Activated CD4-positive, alpha-beta T cell treated with anti-CD3 and anti-CD28 coated beads, Interleukin-2, amount 10 ng/mL, durations not matched to agents 24 days and 14 days (primary cell): ENCODE measurements at regions of chr1 and their contacts with region 1.

Region 1: GRCh38 chr1:7646981-7647901 is 123.9 kb upstream of the VAMP3 start:
- DNase-seq: peak; percentile 89
- H3K4me3 Mint-ChIP-seq: no peak overlapping the region
- H3K27ac Mint-ChIP-seq: no peak overlapping the region
- H3K4me1 Mint-ChIP-seq: no peaks in the 10 kb centered on the region
- H3K27me3 Mint-ChIP-seq: no peaks in the 10 kb centered on the region

Region 2: GRCh38 chr1:6727535-6727934 is 919.7 kb before region 1 on chr1:
- intact Hi-C with region 1: loop called (anchors 5 kb)
- DNase-seq: peak; percentile 87
- H3K4me3 Mint-ChIP-seq: no peak overlapping the region
- H3K27ac Mint-ChIP-seq: no peak overlapping the region
- H3K4me1 Mint-ChIP-seq: peaks cover 3% of the 10 kb centered on the region
- H3K27me3 Mint-ChIP-seq: peaks cover 3% of the 10 kb centered on the region

Region 3: DNA sequence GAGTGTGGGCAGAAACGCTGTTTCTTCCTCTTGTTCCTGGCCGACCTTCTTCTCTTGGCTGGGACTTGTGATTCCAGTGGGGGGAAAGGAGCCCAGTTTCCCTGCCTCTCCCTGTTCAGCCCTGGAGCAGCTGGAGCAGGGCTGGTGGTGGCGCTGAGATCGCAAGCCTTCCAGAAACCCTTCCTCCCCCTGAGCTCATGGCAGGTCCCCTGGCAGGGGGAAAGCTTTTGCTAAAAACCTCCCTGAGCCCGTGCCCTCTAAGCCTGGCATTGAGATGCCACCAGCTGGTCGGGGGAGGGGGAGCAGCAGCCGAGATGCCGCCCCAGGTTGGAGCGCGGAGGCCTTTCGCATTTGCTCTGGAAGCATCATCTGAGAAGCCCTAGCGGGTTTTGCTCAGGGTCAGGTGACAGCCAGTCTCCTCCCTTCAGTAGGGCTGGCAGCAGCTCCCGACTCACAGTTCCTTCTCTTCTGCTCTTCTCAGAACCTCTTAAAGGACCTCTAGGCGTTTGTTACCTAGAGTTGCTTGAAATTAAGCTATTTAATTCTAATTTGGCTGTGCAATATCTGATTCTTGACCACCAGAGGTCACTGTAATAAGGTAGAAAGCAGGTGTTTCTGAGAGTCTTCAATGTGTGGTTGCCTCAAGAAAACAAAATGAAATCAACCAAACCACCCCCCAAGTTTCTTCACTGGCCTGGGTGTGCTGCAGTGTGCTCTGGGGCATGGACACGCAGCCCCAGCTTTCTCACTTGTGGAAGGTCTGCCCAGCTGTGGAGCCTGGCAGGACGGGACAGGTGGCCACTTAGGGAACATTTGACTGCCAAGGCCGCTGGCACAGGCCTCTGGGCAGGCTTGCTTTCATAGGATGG is 604.7 kb before region 1 on chr1:
- intact Hi-C with region 1: loop called (anchors 5 kb)
- DNase-seq: no peak
- H3K4me3 Mint-ChIP-seq: no peak overlapping the region
- H3K27ac Mint-ChIP-seq: no peak overlapping the region
- H3K4me1 Mint-ChIP-seq: no peaks in the 10 kb centered on the region
- H3K27me3 Mint-ChIP-seq: no peaks in the 10 kb centered on the region